GM12878 (cell line): ENCODE measurements at regions of chr19 and their contacts with region 1.

Region 1: GRCh38 chr19:14603990-14604387 is 21.1 kb downstream of the CLEC17A start:
- DNase-seq: peak; percentile 84
- ATAC-seq: peak; percentile 97
- H3K4me3 ChIP-seq: 0 out of 2 replicates have a peak overlapping the region, but pooled peaks have one; percentile 17
- H3K27ac ChIP-seq: peak overlapping the region; percentile 89
- H3K4me1 ChIP-seq: peaks cover 36% of the 10 kb centered on the region
- H3K27me3 ChIP-seq: no peaks in the 10 kb centered on the region
- CTCF ChIP-seq: no peak
- EP300 ChIP-seq: peak in 1 of 2 experiments; percentile 53; a peak in 1 of 4 replicates
- POLR2A ChIP-seq: peak; percentile 38; the same call in 1 of the 2 replicates
- RAD21 ChIP-seq: no peak

Region 2: GRCh38 chr19:14614099-14614412 is 10.1 kb after region 1 on chr19:
- CTCF ChIA-PET with region 1: interaction called, 12 read pairs
- POLR2A ChIA-PET with region 1: interaction called, 7 read pairs
- RAD21 ChIA-PET with region 1: interaction called, 6 read pairs
- SMC1A ChIA-PET with region 1: interaction called, 25 read pairs
- in situ Hi-C with region 1: no loop called
- intact Hi-C with region 1: no loop called
- DNase-seq: peak; percentile 38
- ATAC-seq: peak; percentile 89
- H3K4me3 ChIP-seq: no peak overlapping the region
- H3K27ac ChIP-seq: peak overlapping the region; percentile 49
- H3K4me1 ChIP-seq: peaks cover 20% of the 10 kb centered on the region
- H3K27me3 ChIP-seq: no peaks in the 10 kb centered on the region
- CTCF ChIP-seq: no peak
- EP300 ChIP-seq: peak; percentile 37 to 52; a peak in 2 of 4 replicates
- POLR2A ChIP-seq: peak; percentile 59; the same call in 1 of the 2 replicates
- RAD21 ChIP-seq: no peak